GM10248 (cell line): ENCODE measurements at regions of chr17 and their contacts with region 1.

Region 1: DNA sequence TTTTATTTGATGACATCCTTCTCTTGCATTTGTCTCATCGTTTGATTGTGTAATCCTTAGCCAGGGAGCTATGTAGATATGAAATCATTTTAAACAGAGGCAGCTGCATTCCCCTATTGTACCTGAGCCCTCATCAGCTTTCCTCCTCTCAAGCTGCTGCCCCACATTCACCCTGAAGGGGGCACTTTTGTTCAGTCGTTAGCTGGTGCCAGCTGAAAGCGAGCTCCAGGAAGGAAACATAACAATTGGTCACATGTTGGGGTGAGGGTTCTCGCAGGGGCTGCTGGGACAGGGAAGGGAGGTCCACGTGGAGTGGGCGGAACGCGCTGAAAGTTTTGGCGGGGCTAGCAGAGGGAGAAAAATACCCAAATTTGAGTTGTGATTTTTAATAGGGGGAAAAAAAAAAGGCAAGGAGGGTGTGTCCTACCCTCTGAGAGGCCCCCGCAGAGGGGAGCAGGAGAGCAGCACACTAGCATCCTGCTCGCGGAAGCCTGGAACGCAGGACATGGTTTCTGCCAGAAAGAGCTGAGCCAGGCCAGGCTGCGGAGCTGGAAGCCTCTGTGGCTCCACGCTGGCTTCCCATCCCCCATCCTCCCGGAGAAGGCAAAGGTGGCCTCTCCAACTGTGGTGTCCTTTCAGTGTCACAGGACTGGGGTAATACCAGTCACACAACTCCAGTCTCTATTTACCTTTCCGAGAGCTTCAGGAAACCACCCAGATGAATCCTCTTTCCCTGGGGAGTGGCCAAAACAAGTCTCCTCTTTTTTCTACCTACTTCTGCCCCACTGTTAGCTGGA is 8.5 kb upstream of the MSL1 start:
- DNase-seq: peak; percentile 93
- CTCF ChIP-seq: peak; percentile 77

Region 2: DNA sequence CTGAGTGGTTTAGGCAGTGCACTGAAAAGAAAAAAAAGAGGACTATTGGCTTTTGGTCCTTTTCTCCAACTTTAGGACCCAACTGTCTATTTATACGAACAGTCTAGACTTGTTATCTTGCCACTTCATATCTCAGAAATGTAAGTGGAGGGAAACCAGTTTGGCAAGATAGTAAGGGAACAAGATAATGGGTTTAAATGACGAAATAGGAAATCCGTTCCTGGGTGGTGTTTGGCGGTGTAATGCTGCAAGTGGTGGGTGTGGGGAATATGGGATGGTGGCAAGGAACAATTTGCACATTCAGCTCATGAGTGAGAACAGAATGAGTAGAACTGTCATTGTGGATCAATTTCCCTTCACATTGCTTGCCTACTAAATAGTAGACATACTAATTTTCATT is 330.8 kb before region 1 on chr17:
- CTCF ChIA-PET with region 1: no interaction called
- POLR2A ChIA-PET with region 1: no interaction called
- DNase-seq: no peak
- CTCF ChIP-seq: no peak

Region 3: DNA sequence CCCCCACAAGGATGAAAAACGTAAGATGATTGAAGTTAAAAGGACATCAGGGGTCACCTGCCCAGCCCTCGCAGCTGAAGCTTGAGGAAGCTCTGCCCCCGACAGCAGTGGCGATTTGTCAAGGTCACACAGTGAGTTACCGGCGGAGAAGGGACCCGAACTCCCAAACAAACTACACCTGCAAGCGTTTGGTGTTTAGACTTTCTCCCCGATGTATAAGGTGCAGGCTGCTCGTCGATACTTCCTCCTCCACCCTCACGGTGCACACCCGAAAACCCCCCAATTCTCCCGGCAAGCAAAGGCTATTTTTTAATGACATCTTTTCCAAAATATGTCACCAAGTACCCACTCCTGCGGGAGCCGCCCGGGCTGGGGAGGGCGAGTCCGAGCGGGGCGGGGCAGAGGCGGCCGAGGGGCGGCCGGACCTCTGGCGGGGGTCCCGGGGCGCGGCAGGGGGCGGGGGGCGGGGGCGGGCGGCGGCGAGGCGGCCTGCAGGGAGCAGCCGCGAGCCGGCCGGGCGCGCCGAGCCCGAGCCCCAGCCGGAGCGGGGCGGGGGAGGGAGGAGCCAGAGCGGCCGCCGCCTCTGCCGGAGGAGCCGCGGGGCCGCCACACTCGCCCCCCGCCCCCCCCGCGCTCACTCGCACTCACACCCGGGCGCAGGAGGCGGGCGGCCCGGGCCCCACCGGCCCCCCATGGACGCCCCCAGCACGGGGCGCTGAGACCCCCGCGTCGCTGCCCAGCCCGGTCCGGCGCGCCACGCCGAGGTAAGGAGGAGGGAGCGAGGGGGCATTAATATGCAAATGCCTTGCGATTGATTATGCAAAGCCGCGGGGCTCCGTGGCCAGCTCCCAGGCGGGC is 50.8 kb before region 1 on chr17 and contains the start of gene THRA:
- CTCF ChIA-PET with region 1: interaction called, 16 read pairs
- POLR2A ChIA-PET with region 1: no interaction called
- DNase-seq: peak; percentile 88
- CTCF ChIP-seq: peak; percentile 27

Region 4: GRCh38 chr17:40098846-40099618 is 14.3 kb before region 1 on chr17:
- CTCF ChIA-PET with region 1: interaction called, 180 read pairs
- POLR2A ChIA-PET with region 1: interaction called, 3 read pairs
- DNase-seq: peak; percentile 94
- CTCF ChIP-seq: no peak

Region 5: GRCh38 chr17:40157973-40158372 is 44.7 kb after region 1 on chr17:
- CTCF ChIA-PET with region 1: interaction called, 39 read pairs
- POLR2A ChIA-PET with region 1: no interaction called
- DNase-seq: no peak
- CTCF ChIP-seq: no peak

Region 6: GRCh38 chr17:40191237-40192208 is 78.2 kb after region 1 on chr17:
- CTCF ChIA-PET with region 1: interaction called, 69 read pairs
- POLR2A ChIA-PET with region 1: interaction called, 4 read pairs
- DNase-seq: peak; percentile 87
- CTCF ChIP-seq: peak; percentile 90